Ovary (tissue), 10 donors: ENCODE measurements at regions of chr9 and their contacts with region 1.

Region 1: DNA sequence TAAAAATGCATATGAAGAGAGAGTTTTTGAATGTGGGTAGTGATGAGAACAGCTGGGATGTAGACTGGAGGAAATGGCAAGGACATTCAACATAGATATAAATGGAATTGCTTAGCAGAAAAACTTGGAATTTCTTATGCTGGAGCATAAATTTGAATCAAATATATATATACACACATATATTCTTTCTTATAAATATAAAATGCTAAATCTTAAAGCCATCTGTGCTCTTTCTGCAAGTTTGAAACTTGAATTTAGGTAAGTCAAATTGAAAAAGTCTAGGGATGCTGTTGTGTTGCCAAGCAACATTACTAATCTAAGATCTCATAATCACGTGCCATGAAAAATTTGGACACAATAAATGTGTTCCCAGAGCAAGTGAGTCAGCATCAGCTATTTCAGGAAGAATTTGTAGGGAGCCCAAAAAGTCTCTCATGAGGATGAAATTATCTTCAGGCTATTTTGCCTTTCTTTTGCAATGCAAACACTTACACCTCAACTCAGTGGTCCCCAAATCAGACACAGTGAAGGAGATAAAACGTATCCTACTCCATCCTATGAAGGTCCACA is 58.4 kb upstream of the ALDH1A1 start:
- DNase-seq: no peak
- H3K4me3 ChIP-seq: no peak overlapping the region
- H3K27ac ChIP-seq: no peak overlapping the region
- H3K4me1 ChIP-seq: no peaks in the 10 kb centered on the region
- H3K27me3 ChIP-seq: no peaks in the 10 kb centered on the region
- CTCF ChIP-seq: no peak
- EP300 ChIP-seq: no peak
- POLR2A ChIP-seq: no peak

Region 2: GRCh38 chr9:72952914-72953313 is 58.4 kb before region 1 on chr9 and contains the start of gene ALDH1A1:
- intact Hi-C with region 1: loop called in 1 of 4 experiments (anchors 10 kb)
- DNase-seq: peak in 2 of 5 donors; percentile 17 to 27
- H3K4me3 ChIP-seq: peak within 1 kb of the TSS; percentile 40
- H3K27ac ChIP-seq: peak within 1 kb of the TSS; percentile 51 to 72
- H3K4me1 ChIP-seq: peaks cover 8% of the 10 kb centered on the region
- H3K27me3 ChIP-seq: no peaks in the 10 kb centered on the region
- CTCF ChIP-seq: no peak
- EP300 ChIP-seq: no peak
- POLR2A ChIP-seq: no peak
- total RNA-seq, gene ALDH1A1: 116 to 301 (median 183) TPM